GM12878 (cell line): ENCODE measurements at regions of chr14 and their contacts with region 1.

Region 1: DNA sequence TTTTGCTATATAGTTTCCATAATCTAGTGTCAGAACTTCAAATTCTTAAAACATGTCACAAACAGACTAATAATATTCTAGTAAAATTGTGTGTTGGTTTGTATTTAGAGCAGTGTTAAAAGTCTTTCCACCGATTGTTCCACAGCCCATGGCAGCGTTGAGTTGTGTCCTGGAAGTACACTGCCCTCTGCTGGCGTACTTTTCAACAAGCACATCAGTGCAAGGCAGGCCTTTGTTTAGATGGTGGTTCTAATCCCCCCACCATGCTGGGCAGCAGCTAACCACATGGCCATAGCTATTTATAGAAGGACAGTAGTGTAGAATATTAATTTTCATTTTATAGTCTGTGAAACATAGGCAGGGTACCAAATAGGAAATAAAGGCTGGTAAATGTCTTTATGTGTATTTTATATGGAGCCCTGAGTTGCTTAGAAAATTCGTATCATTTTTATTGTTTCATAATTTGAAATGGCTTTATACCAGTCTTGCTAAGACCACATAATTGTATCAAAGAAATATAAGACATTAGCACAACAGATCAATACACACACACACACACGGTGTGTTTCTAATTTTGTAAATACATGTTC is 235.4 kb downstream of the SEC23A start:
- DNase-seq: no peak
- ATAC-seq: peak; percentile 98
- H3K4me3 ChIP-seq: no peak overlapping the region
- H3K27ac ChIP-seq: no peak overlapping the region
- H3K4me1 ChIP-seq: no peaks in the 10 kb centered on the region
- H3K27me3 ChIP-seq: no peaks in the 10 kb centered on the region
- CTCF ChIP-seq: peak; percentile 77 to 80 (median 79)
- EP300 ChIP-seq: no peak
- POLR2A ChIP-seq: no peak
- RAD21 ChIP-seq: peak; percentile 71

Region 2: DNA sequence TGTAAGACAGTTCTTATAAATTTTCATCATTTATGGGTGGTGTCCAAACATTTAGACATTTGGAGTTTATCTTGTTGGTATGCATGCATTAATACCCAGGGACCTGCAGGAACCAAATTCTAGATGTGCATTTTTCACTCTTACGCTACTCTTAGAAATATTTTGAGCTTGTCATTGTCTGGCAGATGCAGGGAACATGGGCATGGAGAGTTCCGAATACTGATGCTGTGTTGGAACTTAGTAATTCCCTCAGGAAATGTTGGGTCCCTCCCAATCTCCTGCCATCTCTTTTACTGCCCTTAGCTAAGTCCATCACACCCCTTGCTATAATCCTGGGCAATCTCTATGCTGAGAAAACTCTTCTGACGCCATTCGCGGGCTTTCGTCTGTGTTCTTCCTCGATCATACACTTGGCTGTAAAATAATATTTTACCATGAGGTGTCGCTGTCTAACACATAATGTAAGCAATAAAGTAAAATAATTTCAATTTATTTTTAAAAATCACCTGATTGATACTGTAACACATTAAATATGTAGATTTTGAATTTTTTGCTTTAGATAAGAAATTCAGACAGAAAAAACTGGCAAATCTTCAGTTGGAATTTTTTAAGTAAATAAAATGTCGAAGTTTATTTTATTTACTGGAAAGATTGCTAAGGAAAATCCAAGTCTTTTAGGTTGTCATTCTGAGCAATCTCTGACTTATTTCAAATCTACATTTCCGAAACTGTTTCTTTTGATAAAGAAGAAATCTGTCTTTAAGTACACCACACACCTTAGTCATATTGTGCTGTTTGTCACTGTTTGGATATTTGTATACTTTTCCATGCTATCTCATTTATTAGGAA is 964.1 kb before region 1 on chr14:
- CTCF ChIA-PET with region 1: interaction called, 3 read pairs
- POLR2A ChIA-PET with region 1: no interaction called
- RAD21 ChIA-PET with region 1: no interaction called
- SMC1A ChIA-PET with region 1: no interaction called
- in situ Hi-C with region 1: loop called (anchors 10 kb)
- intact Hi-C with region 1: loop called (anchors 10 kb)
- DNase-seq: no peak
- ATAC-seq: peak; percentile 42; the same call in 1 of the 3 replicates
- H3K4me3 ChIP-seq: no peak overlapping the region
- H3K27ac ChIP-seq: no peak overlapping the region
- H3K4me1 ChIP-seq: no peaks in the 10 kb centered on the region
- H3K27me3 ChIP-seq: no peaks in the 10 kb centered on the region
- CTCF ChIP-seq: peak; percentile 30 to 50 (median 41); a peak in 5 of 6 replicates
- EP300 ChIP-seq: no peak
- POLR2A ChIP-seq: no peak
- RAD21 ChIP-seq: peak; percentile 50

Region 3: DNA sequence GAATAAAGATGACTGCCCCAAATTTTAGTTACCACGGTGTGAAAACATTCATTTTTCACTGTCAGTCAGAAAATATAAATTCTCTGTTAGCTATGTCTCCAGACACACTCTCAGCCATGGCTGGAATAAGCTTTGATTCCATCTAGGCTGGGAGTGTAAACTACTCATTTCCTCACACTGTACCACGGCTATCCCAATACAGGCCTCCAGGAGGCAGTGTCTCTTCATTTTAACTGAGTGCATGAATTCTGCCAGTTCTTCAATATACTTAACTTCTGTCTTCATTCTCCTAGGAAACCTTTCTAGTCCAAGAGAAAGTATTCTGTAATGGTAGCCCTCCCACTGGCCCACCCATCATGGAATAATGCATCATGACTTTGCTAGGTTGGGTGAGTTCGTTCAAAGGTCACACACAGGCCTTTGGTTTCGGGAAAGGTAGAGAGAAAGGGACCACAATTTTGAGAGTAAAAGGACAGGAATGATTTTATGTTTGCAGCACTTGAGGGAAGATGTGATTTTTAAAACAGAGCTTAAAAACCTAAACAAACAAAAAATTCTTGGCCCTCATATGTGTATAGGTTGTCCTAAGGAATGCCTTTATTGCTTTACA is 145.7 kb before region 1 on chr14:
- CTCF ChIA-PET with region 1: interaction called, 30 read pairs
- POLR2A ChIA-PET with region 1: no interaction called
- RAD21 ChIA-PET with region 1: interaction called, 7 read pairs
- SMC1A ChIA-PET with region 1: interaction called, 5 read pairs
- in situ Hi-C with region 1: no loop called
- intact Hi-C with region 1: loop called (anchors 2 kb)
- DNase-seq: peak; percentile 4
- ATAC-seq: peak; percentile 89
- H3K4me3 ChIP-seq: no peak overlapping the region
- H3K27ac ChIP-seq: no peak overlapping the region
- H3K4me1 ChIP-seq: no peaks in the 10 kb centered on the region
- H3K27me3 ChIP-seq: no peaks in the 10 kb centered on the region
- CTCF ChIP-seq: peak; percentile 69 to 84 (median 74)
- EP300 ChIP-seq: no peak
- POLR2A ChIP-seq: no peak
- RAD21 ChIP-seq: peak; percentile 74

Region 4: DNA sequence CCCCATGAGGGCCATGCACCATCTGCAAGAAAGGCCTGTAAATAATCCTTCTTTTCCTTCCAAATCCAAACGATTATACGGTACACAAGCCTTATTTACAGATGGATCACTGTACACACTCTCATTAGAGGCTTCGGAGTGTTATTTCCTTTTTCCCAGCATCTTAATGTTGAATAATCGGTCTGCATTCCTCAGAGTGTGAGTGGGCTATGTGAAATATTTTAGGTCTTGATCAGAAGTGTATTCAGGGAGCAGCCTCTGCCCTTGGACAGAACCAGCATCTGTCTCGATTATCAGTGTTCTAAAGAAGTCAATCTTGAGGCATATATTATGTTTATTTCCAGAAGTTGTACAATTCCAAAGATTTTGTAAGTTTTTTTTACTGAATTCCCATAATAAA is 105.2 kb before region 1 on chr14:
- CTCF ChIA-PET with region 1: no interaction called
- POLR2A ChIA-PET with region 1: no interaction called
- RAD21 ChIA-PET with region 1: no interaction called
- SMC1A ChIA-PET with region 1: no interaction called
- in situ Hi-C with region 1: no loop called
- intact Hi-C with region 1: no loop called
- DNase-seq: no peak
- ATAC-seq: no peak
- H3K4me3 ChIP-seq: no peak overlapping the region
- H3K27ac ChIP-seq: no peak overlapping the region
- H3K4me1 ChIP-seq: no peaks in the 10 kb centered on the region
- H3K27me3 ChIP-seq: no peaks in the 10 kb centered on the region
- CTCF ChIP-seq: no peak
- EP300 ChIP-seq: no peak
- POLR2A ChIP-seq: no peak
- RAD21 ChIP-seq: no peak

Region 5: DNA sequence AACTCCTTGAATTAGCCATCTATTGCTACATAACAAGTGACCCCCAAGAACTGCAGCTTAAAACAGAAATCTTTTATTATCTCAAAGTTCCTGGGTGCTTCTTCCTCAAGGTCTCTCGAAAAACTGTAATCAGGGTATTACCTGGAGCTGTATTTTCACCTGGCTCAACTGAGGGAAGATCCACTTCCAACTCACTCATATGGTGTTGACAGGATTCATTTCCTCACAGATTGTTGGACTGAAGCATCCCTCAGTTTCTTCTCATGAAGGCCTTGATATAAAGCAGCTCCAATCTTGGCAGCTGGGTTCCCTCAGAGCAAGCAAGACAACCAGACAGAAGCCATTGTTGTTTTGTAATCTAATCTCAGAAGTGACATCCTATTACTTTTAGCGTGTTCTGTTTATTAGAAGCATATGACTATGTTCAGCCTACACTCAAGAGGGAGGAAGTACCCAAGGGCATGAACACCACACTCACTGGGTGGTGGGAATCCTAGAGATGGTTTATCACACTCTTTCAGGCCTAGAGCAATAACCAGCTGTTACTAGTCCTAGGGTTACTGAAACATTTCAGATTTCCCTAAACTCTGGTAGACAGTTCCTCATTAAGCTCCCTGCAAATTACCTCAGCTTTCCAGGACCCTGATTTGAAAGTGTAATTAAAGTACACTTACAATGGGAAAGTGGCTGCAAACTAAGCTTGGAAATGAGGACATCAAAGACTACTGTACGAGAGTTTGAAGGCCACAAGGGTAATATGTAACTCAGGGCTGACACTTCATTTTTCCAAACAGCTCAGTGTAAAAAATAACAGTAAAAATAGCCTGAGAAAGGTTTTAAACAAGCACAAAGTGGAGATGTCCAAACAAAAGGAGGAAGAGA is 13.2 kb after region 1 on chr14:
- CTCF ChIA-PET with region 1: interaction called, 13 read pairs
- POLR2A ChIA-PET with region 1: no interaction called
- RAD21 ChIA-PET with region 1: interaction called, 3 read pairs
- SMC1A ChIA-PET with region 1: interaction called, 3 read pairs
- in situ Hi-C with region 1: no loop called
- intact Hi-C with region 1: no loop called
- DNase-seq: no peak
- ATAC-seq: no peak
- H3K4me3 ChIP-seq: no peak overlapping the region
- H3K27ac ChIP-seq: no peak overlapping the region
- H3K4me1 ChIP-seq: no peaks in the 10 kb centered on the region
- H3K27me3 ChIP-seq: peaks cover 0 to 2% of the 10 kb centered on the region in 2 experiments; a peak in 1 of 4 replicates
- CTCF ChIP-seq: no peak
- EP300 ChIP-seq: no peak
- POLR2A ChIP-seq: no peak
- RAD21 ChIP-seq: no peak

Region 6: DNA sequence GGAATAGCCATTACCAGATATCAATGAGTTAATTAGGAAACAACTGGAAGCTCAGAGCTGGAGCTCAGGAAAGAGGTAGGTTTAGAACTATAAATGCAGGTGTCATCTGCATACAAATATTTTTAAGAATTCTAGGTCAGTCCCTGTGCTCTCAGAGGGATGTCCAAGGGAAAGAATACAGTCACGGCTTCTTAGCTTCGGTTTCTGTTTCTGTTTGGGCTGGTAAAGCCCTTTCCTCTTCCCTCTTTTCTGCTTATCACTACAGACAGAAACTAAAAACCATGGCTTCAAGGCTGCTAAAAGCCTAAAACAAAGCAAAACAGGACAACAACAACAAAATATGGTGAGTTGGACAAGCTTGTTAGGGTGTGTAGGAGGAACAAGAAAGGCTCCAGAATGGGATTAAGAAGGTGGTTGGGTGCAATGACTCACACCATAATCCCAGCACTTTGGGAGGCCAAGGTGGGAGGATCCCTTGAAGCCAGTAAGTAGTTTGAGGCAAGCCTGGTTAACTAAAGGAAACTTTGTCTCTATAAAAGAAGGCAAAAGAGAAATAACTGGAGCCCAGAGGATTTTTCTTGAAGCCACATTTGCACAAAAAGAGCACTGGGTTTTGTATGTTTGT is 122.4 kb after region 1 on chr14:
- CTCF ChIA-PET with region 1: no interaction called
- POLR2A ChIA-PET with region 1: no interaction called
- RAD21 ChIA-PET with region 1: no interaction called
- SMC1A ChIA-PET with region 1: no interaction called
- in situ Hi-C with region 1: no loop called
- intact Hi-C with region 1: no loop called
- DNase-seq: peak; percentile 32
- ATAC-seq: peak; percentile 89
- H3K4me3 ChIP-seq: peak overlapping the region; percentile 2; the same call in 1 of the 2 replicates
- H3K27ac ChIP-seq: peak overlapping the region; percentile 57
- H3K4me1 ChIP-seq: peaks cover 5% of the 10 kb centered on the region; the same call in 1 of the 2 replicates
- H3K27me3 ChIP-seq: no peaks in the 10 kb centered on the region
- CTCF ChIP-seq: no peak
- EP300 ChIP-seq: no peak
- POLR2A ChIP-seq: no peak
- RAD21 ChIP-seq: no peak

Region 7: GRCh38 chr14:39243822-39244221 is 376.2 kb after region 1 on chr14:
- CTCF ChIA-PET with region 1: no interaction called
- POLR2A ChIA-PET with region 1: no interaction called
- RAD21 ChIA-PET with region 1: no interaction called
- SMC1A ChIA-PET with region 1: no interaction called
- in situ Hi-C with region 1: no loop called
- intact Hi-C with region 1: no loop called
- DNase-seq: no peak
- ATAC-seq: no peak
- H3K4me3 ChIP-seq: no peak overlapping the region
- H3K27ac ChIP-seq: no peak overlapping the region
- H3K4me1 ChIP-seq: no peaks in the 10 kb centered on the region
- H3K27me3 ChIP-seq: no peaks in the 10 kb centered on the region
- CTCF ChIP-seq: no peak
- EP300 ChIP-seq: no peak
- POLR2A ChIP-seq: no peak
- RAD21 ChIP-seq: no peak